ENCODE measurements at regions of chr16 and their contacts with region 1.

Region 1: DNA sequence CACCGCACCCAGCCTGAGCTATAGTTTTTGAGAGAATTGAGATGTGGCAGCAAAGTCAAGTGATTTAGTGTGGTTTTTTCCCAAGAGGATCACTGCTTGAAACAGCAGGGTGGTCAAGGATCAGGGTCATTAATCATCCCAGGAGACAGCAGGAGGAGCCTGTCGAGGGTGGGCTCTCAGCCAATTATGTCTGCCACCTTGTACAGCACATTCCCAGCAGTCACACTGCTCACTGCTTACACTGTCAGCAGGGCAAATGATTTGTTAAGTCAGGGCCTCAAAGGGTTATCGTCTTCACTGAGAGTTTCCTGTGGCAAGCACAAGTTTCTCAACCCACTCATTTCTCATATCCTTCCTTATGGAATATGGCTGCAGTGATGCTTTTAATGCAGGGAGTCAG is 13.2 kb downstream of the B3GNT9 start:
- DNase-seq: no peak

Region 2: DNA sequence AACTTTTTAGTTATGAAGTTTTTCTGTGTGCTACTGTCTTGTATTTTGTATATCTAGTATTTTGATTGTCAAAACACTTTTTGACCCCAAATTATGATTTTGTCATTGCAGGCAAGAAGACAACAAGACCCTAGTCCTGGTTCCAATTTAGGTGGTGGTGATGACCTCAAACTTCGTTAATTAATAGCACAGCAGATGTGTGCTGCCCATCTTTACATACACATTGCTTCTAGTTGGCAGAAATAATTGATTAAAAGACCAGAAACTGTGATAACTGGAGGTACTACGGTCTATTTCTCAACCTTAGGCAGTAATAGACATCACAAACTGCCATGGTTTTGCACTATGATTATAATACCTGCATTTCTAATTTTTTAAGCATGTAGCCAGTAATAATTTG is 39.0 kb before region 1 on chr16:
- in situ Hi-C with region 1: loop called (anchors 5 kb)
- DNase-seq: no peak

Measured in G401 (cell line).